Activated CD8-positive, alpha-beta T cell treated with anti-CD3 and anti-CD28 coated beads for 36 hours (primary cell): ENCODE measurements at regions of chr18 and their contacts with region 1.

Region 1: DNA sequence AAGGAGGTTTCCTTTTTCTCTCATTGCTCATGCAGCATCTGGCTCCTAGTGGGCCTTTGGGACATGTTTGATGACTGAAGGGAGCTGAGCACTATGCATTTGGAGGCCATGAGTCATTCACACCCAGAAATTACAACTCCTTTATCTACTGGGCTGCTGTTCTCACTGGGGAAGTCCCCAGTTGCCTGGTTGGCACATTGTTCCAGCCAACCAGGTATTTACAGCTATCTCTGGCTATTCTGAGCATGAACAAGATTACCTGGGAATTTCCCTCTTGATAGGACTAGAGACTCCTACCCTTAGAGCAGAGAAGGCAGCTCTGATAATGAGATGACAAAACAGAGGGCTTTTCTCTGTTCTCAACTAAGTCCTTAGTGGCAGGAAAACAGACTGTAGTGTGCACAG is 206.5 kb downstream of the SETBP1 start:
- DNase-seq: peak; percentile 74
- ATAC-seq: peak; percentile 97
- H3K4me3 Mint-ChIP-seq: no peak overlapping the region
- H3K27ac Mint-ChIP-seq: peak overlapping the region; percentile 92
- H3K4me1 Mint-ChIP-seq: peaks cover 34% of the 10 kb centered on the region
- H3K27me3 Mint-ChIP-seq: no peaks in the 10 kb centered on the region
- CTCF ChIP-seq: no peak

Region 2: GRCh38 chr18:44758861-44759631 is 128.2 kb before region 1 on chr18:
- CTCF ChIA-PET with region 1: interaction called, 6 read pairs
- POLR2A ChIA-PET with region 1: interaction called, 8 read pairs
- intact Hi-C with region 1: loop called (anchors 5 kb)
- DNase-seq: peak; percentile 79
- ATAC-seq: peak; percentile 91
- H3K4me3 Mint-ChIP-seq: peak overlapping the region; percentile 27
- H3K27ac Mint-ChIP-seq: peak overlapping the region; percentile 94
- H3K4me1 Mint-ChIP-seq: peaks cover 26% of the 10 kb centered on the region
- H3K27me3 Mint-ChIP-seq: peaks cover 3% of the 10 kb centered on the region
- CTCF ChIP-seq: no peak

Region 3: DNA sequence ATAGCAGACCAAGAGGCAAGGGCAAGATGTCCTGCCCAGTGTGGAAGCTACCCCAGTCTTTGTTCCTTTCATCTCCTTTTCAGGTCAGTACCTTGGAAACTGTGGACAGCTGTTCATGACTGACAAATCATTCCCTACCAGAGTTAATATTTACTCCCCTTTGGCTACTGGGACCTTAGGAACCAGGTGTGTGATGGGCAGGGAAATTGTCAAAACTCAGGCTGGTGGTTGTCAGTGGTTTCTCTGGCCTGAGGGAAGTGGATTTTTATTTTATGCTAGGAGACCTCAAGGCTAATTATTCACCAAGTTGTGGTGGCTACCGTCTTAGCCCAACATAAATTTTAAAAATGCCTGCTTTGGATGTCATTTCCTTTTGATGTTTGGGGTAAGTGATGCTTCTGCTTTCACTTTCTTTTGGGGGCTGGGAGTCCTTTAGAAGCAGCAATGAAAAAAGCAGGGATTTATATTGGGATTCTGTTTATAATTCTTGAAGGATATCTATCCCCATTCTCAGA is 87.3 kb before region 1 on chr18:
- CTCF ChIA-PET with region 1: no interaction called
- POLR2A ChIA-PET with region 1: interaction called, 3 read pairs
- intact Hi-C with region 1: loop called (anchors 5 kb)
- DNase-seq: no peak
- ATAC-seq: peak; percentile 13
- H3K4me3 Mint-ChIP-seq: peak overlapping the region; percentile 3
- H3K27ac Mint-ChIP-seq: peak overlapping the region; percentile 60
- H3K4me1 Mint-ChIP-seq: peaks cover 74% of the 10 kb centered on the region
- H3K27me3 Mint-ChIP-seq: no peaks in the 10 kb centered on the region
- CTCF ChIP-seq: no peak